Endothelial cell of umbilical vein (primary cell): ENCODE measurements at regions of chr2 and their contacts with region 1.

Region 1: GRCh38 chr2:223993621-223994232 is 36.5 kb downstream of the MRPL44 start:
- DNase-seq: peak; percentile 74
- H3K4me3 ChIP-seq: no peak overlapping the region
- H3K27ac ChIP-seq: no peak overlapping the region
- H3K4me1 ChIP-seq: no peaks in the 10 kb centered on the region
- H3K27me3 ChIP-seq: no peaks in the 10 kb centered on the region
- CTCF ChIP-seq: peak; percentile 69 to 75
- POLR2A ChIP-seq: no peak

Region 2: DNA sequence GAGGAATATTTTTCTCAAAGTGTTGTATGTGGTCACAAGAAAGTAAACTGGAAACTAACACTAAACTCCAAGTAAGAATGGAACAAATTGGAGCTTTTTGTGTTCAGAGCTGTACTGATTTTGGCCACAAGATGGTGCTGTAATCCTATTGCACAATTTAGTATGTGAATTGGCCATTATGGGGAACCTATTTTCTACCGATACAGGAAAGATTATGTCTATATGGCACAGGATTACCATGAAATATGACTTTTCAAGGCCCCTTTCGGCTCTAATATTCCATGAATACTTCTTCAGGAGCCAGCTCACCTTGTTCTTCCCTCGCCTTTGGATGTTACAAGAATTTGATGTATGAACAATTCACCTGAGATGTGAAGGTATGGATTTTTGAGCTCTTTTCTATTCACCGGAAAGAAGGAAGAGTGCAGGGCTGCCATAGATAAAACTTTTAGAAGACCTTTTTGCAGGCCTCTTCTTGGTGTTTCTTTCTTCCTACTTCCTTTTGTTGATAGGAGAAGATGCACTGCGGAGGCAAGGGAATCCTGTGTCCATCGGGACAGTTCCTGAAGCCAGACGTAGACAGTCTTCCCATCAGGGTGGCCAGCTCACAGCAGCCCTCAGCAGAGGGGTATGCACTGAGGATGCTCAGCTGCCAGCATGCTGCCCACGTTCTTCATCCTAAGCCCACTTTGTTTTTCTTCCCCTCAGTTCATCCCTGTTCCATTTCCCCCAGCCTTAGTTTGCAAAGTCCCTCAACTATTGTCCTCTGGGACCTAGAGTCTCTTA is 23.2 kb before region 1 on chr2:
- CTCF ChIA-PET with region 1: interaction called, 174 read pairs
- POLR2A ChIA-PET with region 1: no interaction called
- dilution Hi-C with region 1: no loop called
- intact Hi-C with region 1: loop called (anchors 1 kb)
- DNase-seq: peak; percentile 76
- H3K4me3 ChIP-seq: no peak overlapping the region
- H3K27ac ChIP-seq: no peak overlapping the region
- H3K4me1 ChIP-seq: no peaks in the 10 kb centered on the region
- H3K27me3 ChIP-seq: no peaks in the 10 kb centered on the region
- CTCF ChIP-seq: peak; percentile 65 to 68
- POLR2A ChIP-seq: no peak

Region 3: DNA sequence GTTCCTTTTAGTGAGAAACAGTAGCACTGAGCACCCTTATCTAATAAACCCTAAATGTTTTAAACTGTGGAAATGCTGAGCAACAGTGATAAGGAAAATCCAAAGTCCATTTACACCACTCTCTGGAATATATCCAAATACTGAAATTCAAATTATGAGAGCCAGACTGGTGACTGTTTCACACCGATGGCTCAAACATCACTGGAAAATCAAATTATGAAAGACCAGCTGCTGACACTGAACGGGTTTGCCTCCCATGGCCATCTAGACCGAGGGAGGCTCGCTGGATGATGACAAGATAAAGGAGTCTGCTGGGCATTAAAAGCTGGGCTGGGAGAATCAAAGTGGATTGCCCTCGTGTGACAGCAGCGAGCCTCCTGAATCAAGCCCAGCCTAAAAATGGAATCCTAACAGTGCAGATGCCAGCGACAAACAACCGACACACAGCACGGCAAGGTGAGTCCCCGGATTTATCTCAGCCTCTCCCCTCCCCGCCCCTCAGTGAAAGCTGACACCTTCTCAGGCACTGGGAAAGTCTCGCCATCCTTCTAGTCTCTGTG is 15.1 kb after region 1 on chr2:
- CTCF ChIA-PET with region 1: interaction called, 73 read pairs
- POLR2A ChIA-PET with region 1: no interaction called
- dilution Hi-C with region 1: no loop called
- intact Hi-C with region 1: no loop called
- DNase-seq: no peak
- H3K4me3 ChIP-seq: no peak overlapping the region
- H3K27ac ChIP-seq: no peak overlapping the region
- H3K4me1 ChIP-seq: peaks cover 10% of the 10 kb centered on the region
- H3K27me3 ChIP-seq: no peaks in the 10 kb centered on the region
- CTCF ChIP-seq: no peak
- POLR2A ChIP-seq: no peak

Region 4: DNA sequence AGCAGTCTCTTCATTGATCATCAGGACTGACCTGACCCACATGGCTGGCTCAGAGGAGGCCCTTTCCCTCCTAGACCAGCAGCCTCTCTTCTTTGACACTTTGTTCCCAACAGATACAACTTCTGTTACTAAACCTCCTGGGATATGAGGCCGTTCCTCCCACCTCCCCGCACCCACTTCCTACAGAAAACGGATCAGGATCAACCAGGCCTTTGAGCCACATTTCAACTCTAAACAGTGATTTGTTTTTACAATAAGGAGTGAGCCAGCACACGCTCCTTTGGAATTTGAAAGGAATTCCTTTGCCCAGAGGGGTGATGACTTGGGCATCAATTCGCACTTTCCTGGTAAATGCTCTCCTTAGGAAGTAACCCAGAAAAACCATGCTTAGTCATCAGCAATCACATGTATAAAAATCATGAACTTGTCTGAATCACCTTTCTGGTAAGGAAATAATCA is 227.8 kb after region 1 on chr2:
- CTCF ChIA-PET with region 1: interaction called, 17 read pairs
- POLR2A ChIA-PET with region 1: no interaction called
- dilution Hi-C with region 1: no loop called
- intact Hi-C with region 1: loop called (anchors 1 kb)
- DNase-seq: peak; percentile 88
- H3K4me3 ChIP-seq: no peak overlapping the region
- H3K27ac ChIP-seq: peak overlapping the region; percentile 99
- H3K4me1 ChIP-seq: peaks cover 26% of the 10 kb centered on the region
- H3K27me3 ChIP-seq: no peaks in the 10 kb centered on the region
- CTCF ChIP-seq: no peak
- POLR2A ChIP-seq: no peak

Region 5: DNA sequence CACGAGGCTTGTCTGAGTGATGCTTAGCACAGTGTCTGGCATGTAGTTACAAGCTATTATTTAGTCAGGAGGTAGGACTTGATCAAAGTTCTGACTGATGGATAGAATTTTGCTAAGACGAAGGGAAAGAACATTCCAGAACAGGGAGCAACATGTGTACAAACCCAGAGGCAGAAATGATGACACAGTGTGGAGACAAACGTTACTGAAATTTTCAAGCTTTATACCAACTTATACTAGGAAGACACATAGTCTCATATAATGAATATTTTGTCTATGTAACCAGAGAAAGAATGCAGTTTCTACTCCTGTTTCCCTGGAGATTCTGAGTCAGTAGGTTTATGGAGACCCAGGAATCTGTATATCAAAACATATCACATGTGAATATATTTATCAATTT is 284.8 kb after region 1 on chr2:
- CTCF ChIA-PET with region 1: interaction called, 875 read pairs
- POLR2A ChIA-PET with region 1: no interaction called
- dilution Hi-C with region 1: no loop called
- intact Hi-C with region 1: no loop called
- DNase-seq: no peak
- H3K4me3 ChIP-seq: no peak overlapping the region
- H3K27ac ChIP-seq: no peak overlapping the region
- H3K4me1 ChIP-seq: no peaks in the 10 kb centered on the region
- H3K27me3 ChIP-seq: peaks cover 0 to 10% of the 10 kb centered on the region in 2 experiments
- CTCF ChIP-seq: no peak
- POLR2A ChIP-seq: no peak